Endothelial cell of umbilical vein (primary cell): ENCODE measurements at regions of chr10 and their contacts with region 1.

Region 1: DNA sequence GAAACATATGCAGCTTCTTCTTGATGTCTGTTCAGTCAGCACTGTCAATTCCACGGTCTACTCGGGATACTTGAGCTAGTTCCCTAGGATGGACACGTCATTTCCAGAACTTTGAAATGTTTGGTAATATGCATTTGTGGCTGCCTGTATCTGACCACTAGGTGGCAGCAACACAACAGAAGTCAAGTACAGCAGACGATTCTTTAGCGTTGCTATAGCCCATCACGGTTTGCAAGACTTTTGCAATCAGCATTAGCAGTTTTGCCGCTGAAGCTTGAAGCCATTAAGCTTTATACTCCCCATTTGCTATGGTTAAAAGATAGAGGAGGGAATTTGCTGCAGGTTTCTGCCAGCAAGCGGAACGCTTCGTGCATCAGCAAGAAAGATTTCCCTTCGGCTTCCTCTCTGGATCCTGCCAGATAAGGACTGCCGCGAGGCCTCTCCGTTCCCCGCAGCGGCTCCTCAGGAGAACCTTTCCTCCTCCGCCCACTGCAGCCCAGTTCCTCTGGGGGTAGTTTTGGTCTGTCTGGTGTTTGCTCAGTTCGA is 63.5 kb downstream of the ABCC2 start:
- DNase-seq: peak; percentile 94
- H3K4me3 ChIP-seq: peak overlapping the region in 1 of 3 experiments; percentile 41
- H3K27ac ChIP-seq: peak overlapping the region; percentile 10
- H3K4me1 ChIP-seq: peaks cover 18% of the 10 kb centered on the region
- H3K27me3 ChIP-seq: no peaks in the 10 kb centered on the region
- CTCF ChIP-seq: peak; percentile 72 to 94
- POLR2A ChIP-seq: no peak

Region 2: GRCh38 chr10:99395750-99396445 is 450.0 kb before region 1 on chr10:
- CTCF ChIA-PET with region 1: no interaction called
- POLR2A ChIA-PET with region 1: no interaction called
- dilution Hi-C with region 1: no loop called
- intact Hi-C with region 1: no loop called
- DNase-seq: peak; percentile 57
- H3K4me3 ChIP-seq: no peak overlapping the region
- H3K27ac ChIP-seq: peak overlapping the region; percentile 32
- H3K4me1 ChIP-seq: peaks cover 24% of the 10 kb centered on the region
- H3K27me3 ChIP-seq: no peaks in the 10 kb centered on the region
- CTCF ChIP-seq: no peak
- POLR2A ChIP-seq: no peak

Region 3: DNA sequence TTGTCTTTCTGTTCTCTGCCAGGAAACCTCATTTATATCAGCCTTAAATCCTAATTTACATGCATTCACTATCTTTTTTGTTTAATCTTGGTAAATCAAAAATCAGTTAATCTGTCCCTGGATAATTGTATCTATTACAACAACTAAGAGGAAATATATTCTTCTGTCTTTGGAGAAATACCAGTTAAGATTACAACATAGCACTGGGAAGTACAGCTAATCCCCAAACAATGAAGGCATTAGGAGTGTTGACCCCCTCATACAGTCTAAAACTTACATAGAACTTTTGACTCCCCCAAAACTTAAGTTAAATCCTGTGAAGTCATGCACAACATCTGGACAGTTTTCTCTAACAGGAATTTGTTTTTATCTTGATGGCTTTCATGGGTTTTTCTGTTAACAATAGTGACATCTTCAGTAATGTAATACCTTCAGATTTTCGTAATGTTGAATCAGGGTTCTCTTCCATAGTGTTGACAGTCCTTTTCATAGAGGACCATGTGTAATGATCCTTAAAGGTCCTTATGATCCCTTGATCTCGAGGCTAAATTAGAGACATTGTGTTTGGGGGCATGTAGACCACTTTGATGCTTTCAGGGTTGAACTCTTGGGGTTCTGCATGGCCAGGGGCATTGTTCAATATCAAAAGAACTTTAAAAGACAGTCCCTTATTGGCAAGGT is 87.6 kb before region 1 on chr10:
- CTCF ChIA-PET with region 1: interaction called, 15 read pairs
- POLR2A ChIA-PET with region 1: no interaction called
- dilution Hi-C with region 1: no loop called
- intact Hi-C with region 1: no loop called
- DNase-seq: no peak
- H3K4me3 ChIP-seq: no peak overlapping the region
- H3K27ac ChIP-seq: no peak overlapping the region
- H3K4me1 ChIP-seq: no peaks in the 10 kb centered on the region
- H3K27me3 ChIP-seq: no peaks in the 10 kb centered on the region
- CTCF ChIP-seq: no peak
- POLR2A ChIP-seq: no peak

Region 4: GRCh38 chr10:99888622-99889021 is 42.7 kb after region 1 on chr10:
- CTCF ChIA-PET with region 1: interaction called, 12 read pairs
- POLR2A ChIA-PET with region 1: no interaction called
- dilution Hi-C with region 1: no loop called
- intact Hi-C with region 1: no loop called
- DNase-seq: no peak
- H3K4me3 ChIP-seq: no peak overlapping the region
- H3K27ac ChIP-seq: no peak overlapping the region
- H3K4me1 ChIP-seq: no peaks in the 10 kb centered on the region
- H3K27me3 ChIP-seq: no peaks in the 10 kb centered on the region
- CTCF ChIP-seq: no peak
- POLR2A ChIP-seq: no peak

Region 5: GRCh38 chr10:100046021-100046486 is 200.1 kb after region 1 on chr10:
- CTCF ChIA-PET with region 1: interaction called, 174 read pairs
- POLR2A ChIA-PET with region 1: interaction called, 7 read pairs
- dilution Hi-C with region 1: no loop called
- intact Hi-C with region 1: loop called (anchors 1 kb)
- DNase-seq: peak; percentile 85
- H3K4me3 ChIP-seq: no peak overlapping the region
- H3K27ac ChIP-seq: no peak overlapping the region
- H3K4me1 ChIP-seq: peaks cover 19% of the 10 kb centered on the region
- H3K27me3 ChIP-seq: no peaks in the 10 kb centered on the region
- CTCF ChIP-seq: peak; percentile 88 to 94
- POLR2A ChIP-seq: no peak

Region 6: DNA sequence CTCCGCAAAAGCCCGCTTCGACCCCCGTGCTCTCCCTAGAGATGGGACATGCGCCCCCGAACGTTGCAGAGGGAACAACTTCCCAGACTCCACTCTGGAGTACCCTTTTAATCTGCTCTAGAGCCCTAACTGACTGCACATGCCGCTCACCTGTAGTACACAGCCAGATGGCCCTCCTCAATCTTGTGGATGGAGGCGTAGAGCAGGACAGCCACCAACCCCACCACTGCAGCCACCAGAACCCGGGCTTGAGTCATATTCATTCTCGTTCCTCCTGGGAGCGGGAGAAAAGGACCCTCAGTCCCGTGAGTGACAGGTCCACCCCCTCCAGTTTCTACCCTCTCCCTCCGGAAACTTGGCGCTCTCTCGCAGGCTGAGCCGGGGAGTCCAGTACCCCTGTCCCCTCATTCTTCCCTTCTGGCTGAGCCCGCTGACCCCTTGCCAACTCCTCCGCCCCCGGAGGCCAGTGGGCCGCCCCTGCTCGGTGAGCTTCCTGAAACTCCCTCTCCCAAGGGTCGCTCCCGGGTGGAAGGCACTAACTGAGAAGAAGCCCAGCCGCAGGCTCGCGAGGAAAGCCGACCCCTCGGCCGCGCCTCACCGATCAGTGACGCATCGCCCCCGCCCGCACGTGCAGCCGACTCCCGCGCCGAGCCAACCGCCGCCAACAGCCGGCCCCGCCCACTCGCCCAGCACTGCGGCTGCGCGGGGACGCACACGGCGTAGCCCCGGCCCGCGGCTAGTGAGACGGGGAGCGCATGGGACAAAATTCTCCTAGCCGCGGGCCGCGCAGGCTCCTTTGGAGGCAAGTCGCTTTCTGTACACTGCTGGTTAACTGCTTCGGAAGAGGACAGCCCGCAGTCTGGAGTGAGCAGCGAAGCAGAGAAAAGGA is 339.7 kb after region 1 on chr10 and contains the start of gene ERLIN1:
- CTCF ChIA-PET with region 1: interaction called, 7 read pairs
- POLR2A ChIA-PET with region 1: no interaction called
- dilution Hi-C with region 1: no loop called
- intact Hi-C with region 1: loop called (anchors 1 kb)
- DNase-seq: peak; percentile 95
- H3K4me3 ChIP-seq: peak within 1 kb of the TSS; percentile 51 to 89 (median 55)
- H3K27ac ChIP-seq: peak within 1 kb of the TSS; percentile 42
- H3K4me1 ChIP-seq: peaks cover 16% of the 10 kb centered on the region
- H3K27me3 ChIP-seq: no peaks in the 10 kb centered on the region
- CTCF ChIP-seq: peak in 1 of 2 donors; percentile 8
- POLR2A ChIP-seq: peak; percentile 88
- total RNA-seq, gene ERLIN1: 51.0 and 51.9 TPM in 2 replicates

Region 7: DNA sequence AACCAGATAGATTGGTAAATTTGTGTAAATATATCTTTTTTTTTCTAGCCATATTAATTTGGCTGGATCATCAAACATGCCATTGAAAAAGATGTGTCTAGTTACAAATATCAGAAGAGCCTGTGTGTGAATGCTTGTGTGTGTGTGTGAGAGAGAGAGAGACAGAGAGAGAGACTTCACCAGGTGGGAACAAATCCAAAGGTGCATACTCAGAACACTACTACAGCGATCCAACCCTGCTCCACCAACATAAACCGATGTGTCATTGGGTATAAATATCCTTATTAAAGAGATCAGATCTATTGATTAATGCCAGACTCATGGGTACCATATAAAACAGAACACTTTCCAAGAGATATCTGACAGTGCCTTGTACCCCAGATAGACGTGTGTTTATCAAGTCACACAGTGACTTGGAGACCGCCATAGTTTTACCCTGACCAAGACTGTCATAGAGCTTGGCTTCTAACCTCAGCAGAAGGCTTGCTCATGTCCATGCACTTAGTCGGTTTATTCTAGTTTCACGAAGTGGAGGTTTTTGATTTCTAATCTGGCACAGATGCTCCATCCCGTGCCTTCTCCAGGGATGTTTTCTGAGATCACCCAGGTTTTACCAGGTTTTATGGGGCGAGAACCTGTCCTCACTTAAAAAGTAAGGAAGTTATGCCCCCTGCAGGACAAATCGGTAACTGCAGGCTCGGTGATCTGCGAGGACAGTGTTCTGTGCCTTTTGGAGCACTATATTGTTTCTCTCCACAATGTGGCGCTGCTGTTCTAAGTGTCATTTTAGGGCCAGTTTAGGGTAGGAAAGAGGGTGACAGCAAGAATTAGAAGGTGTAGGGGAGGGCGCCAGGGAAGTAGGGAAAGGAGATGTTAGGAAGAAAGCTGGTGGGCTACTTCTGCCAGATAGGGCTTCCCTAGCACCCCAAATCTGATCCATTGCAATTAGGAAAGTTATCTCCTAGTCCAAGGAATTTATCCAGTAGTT is 587.6 kb after region 1 on chr10:
- CTCF ChIA-PET with region 1: interaction called, 3 read pairs
- POLR2A ChIA-PET with region 1: no interaction called
- dilution Hi-C with region 1: no loop called
- intact Hi-C with region 1: loop called (anchors 5 kb)
- DNase-seq: peak; percentile 93
- H3K4me3 ChIP-seq: no peak overlapping the region
- H3K27ac ChIP-seq: no peak overlapping the region
- H3K4me1 ChIP-seq: no peaks in the 10 kb centered on the region
- H3K27me3 ChIP-seq: peaks cover 2% of the 10 kb centered on the region in 2 experiments
- CTCF ChIP-seq: peak; percentile 91 to 100
- POLR2A ChIP-seq: no peak

Region 8: GRCh38 chr10:100448951-100449350 is 603.0 kb after region 1 on chr10:
- CTCF ChIA-PET with region 1: no interaction called
- POLR2A ChIA-PET with region 1: no interaction called
- dilution Hi-C with region 1: no loop called
- intact Hi-C with region 1: no loop called
- DNase-seq: no peak
- H3K4me3 ChIP-seq: no peak overlapping the region
- H3K27ac ChIP-seq: no peak overlapping the region
- H3K4me1 ChIP-seq: no peaks in the 10 kb centered on the region
- H3K27me3 ChIP-seq: peaks cover 0 to 10% of the 10 kb centered on the region in 2 experiments
- CTCF ChIP-seq: no peak
- POLR2A ChIP-seq: no peak

Region 9: GRCh38 chr10:100479037-100479436 is 633.1 kb after region 1 on chr10:
- CTCF ChIA-PET with region 1: no interaction called
- POLR2A ChIA-PET with region 1: no interaction called
- dilution Hi-C with region 1: no loop called
- intact Hi-C with region 1: no loop called
- DNase-seq: no peak
- H3K4me3 ChIP-seq: no peak overlapping the region
- H3K27ac ChIP-seq: no peak overlapping the region
- H3K4me1 ChIP-seq: peaks cover 12% of the 10 kb centered on the region
- H3K27me3 ChIP-seq: peaks cover 34 to 38% of the 10 kb centered on the region in 2 experiments
- CTCF ChIP-seq: no peak
- POLR2A ChIP-seq: no peak

Region 10: GRCh38 chr10:101512738-101513137 is 1666.8 kb after region 1 on chr10:
- CTCF ChIA-PET with region 1: no interaction called
- POLR2A ChIA-PET with region 1: no interaction called
- dilution Hi-C with region 1: no loop called
- intact Hi-C with region 1: no loop called
- DNase-seq: no peak
- H3K4me3 ChIP-seq: no peak overlapping the region
- H3K27ac ChIP-seq: no peak overlapping the region
- H3K4me1 ChIP-seq: no peaks in the 10 kb centered on the region
- H3K27me3 ChIP-seq: no peaks in the 10 kb centered on the region
- CTCF ChIP-seq: no peak
- POLR2A ChIP-seq: no peak